Activated CD4-positive, alpha-beta T cell treated with anti-CD3 and anti-CD28 coated beads for 36 hours (primary cell): ENCODE measurements at regions of chr15 and their contacts with region 1.

Region 1: DNA sequence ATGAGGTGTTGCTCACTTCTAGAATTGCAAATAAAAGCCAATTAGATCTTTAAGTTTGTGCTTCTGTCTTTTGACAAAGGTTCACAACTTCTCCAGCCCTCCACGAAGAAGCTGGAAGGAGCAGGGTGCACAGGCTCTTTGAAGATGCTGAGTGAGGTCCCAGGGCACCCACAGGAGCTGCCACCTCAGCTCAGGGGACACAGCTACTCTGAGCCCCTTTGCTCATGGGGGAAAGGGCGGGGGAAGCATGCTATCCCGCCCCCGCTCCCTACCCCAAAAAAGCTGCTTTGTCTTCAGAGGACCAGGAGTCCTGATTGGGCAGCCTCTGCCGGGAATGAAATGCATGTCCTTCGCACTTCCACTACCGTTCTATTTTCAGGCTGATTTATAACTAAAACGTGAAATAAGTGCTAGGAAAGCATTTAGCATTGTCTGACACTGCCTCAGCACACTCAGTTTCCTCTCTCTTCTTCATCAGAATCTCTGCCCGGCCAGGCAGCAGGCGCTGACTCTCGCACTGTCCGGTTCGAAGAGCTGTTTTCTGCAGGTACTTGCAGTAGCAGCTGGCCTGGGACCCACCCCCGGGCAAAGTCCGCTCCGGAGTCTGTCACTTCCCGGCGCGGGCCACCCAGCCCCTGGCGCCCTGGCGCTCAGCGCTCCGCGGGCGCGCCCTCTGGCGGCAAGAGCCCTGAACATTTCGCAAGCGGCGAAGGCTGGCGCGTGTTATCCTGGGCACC is 45.5 kb upstream of the KLHL25 start:
- DNase-seq: peak; percentile 89
- ATAC-seq: peak; percentile 97
- H3K4me3 Mint-ChIP-seq: peak overlapping the region; percentile 44
- H3K27ac Mint-ChIP-seq: no peak overlapping the region
- H3K4me1 Mint-ChIP-seq: no peaks in the 10 kb centered on the region
- H3K27me3 Mint-ChIP-seq: peaks cover 5% of the 10 kb centered on the region

Region 2: DNA sequence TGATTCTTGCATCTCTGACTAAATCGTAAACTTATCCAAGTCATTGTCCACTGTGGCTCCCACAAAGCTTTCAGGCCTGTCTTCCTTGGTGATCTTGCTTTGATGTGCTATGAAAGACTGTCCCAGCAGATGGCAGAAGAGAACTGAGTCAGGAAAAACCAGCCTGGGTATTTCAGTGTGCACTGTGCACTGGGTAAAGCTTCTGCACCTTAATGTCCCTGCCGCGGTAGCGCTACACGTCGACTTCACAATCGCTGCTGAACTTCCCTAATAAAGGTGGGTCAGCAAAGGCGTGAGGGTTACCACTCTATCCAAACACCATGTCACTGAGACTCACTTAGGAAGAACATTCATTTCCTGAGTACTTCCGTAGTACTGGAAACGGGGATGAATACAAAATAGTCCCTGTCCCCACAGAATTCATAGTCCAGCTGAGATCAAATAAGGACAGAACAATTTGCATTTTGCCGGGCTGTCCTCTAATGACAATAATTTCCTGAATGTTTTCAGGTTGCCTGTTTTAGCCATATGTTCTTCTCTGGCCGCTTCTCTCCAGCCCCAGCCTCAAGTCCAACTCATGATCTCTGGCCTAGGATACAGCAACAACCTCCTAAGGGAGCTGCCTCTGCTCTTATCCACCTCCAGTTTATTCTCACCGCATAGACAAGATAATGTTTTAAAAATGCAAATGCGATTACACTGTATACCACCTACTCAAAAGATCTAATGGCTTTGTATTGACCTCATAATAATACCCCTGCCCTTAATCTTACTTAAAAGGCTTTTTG is 543.4 kb before region 1 on chr15:
- CTCF ChIA-PET with region 1: interaction called, 11 read pairs
- POLR2A ChIA-PET with region 1: no interaction called
- intact Hi-C with region 1: loop called (anchors 1 to 5 kb)
- DNase-seq: peak; percentile 79
- ATAC-seq: peak; percentile 100
- H3K4me3 Mint-ChIP-seq: no peak overlapping the region
- H3K27ac Mint-ChIP-seq: peak overlapping the region; percentile 38
- H3K4me1 Mint-ChIP-seq: peaks cover 11% of the 10 kb centered on the region
- H3K27me3 Mint-ChIP-seq: peaks cover 1% of the 10 kb centered on the region

Region 3: DNA sequence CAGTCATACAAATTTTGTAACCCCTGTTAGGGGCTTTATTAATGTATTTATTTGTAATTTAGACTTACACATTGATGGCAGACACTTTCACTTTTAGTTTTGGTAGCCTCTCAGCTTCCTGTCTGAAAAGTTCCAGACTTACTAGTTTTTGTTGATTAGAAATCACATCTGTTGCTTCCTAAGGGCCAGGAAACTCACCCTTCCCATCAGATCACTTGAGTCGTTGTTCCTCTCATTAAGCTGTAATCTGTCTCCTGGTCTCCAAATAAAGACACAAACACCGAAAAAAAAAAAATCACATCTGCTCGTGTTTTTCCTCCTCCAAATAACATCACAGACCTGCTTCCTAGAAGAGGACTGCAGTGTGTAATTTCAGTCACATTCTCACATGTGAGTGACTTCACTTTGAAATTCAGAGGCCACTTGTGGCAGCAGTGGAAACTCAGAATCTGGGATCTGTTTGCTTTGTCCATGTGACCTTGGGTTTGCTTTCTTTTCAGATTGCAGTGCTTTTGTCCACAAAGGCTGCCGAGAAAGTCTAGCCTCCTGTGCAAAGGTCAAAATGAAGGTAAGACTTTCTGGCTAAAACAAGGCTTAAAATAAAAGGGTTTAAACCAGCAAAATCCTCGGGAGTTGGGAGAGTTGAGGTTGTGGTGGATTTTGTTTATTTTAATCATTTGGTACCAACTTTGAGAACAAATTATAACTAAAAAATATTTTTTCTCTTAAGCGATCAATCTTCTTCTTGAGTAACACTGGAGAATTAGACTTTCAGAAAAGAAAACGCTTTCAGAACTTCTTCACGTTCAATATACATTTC is 132.5 kb before region 1 on chr15:
- CTCF ChIA-PET with region 1: no interaction called
- POLR2A ChIA-PET with region 1: no interaction called
- intact Hi-C with region 1: no loop called
- DNase-seq: peak; percentile 47
- ATAC-seq: peak; percentile 13
- H3K4me3 Mint-ChIP-seq: peak overlapping the region; percentile 68
- H3K27ac Mint-ChIP-seq: peak overlapping the region; percentile 96
- H3K4me1 Mint-ChIP-seq: peaks cover 90% of the 10 kb centered on the region
- H3K27me3 Mint-ChIP-seq: no peaks in the 10 kb centered on the region

Region 4: DNA sequence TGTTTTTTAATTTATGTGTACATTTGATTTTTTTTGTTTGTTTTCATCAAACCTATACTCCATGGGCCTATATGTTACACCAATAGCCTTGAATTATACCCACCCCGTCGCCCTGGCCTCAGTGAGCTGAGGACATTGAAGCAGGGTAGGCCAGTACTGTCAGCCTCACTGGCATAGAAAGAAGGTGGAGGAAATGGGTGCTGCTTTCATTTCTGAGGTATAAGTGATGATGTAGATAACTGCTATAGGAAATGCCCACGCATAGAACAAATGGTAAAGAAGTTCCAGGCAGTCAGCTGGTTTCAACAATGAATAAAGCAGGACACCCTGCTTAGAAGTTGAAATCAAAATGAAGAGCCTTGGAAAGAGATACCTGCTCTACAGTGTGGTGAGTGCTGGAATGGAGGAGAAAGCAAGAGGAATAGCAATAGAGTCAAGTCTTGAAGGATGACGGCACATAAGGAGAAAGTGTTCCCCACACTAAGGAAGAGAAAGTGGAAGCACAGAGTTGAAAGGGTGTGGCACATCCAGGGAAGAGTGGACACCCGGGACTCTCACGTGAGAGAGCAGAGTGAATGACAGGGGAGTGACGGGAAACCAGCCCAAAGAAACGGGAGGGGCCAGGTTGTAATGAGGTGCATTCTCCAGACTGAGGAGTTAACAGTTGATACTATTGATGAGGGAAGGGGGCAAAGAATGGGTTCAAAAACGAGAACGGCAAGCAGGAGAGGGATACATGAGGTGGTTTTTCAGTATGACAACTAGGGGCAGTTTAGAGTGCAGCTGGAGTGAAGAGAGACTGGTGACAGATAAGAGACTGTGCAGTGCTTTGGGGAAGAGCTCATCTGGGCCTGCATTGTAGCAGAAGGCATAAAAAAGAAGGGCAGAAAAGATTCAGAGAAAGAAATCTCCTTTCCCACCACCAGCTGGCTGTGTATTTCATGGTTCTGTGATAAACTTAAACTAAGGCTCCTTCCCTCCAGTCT is 116.0 kb before region 1 on chr15:
- CTCF ChIA-PET with region 1: interaction called, 25 read pairs
- POLR2A ChIA-PET with region 1: interaction called, 8 read pairs
- intact Hi-C with region 1: no loop called
- DNase-seq: peak; percentile 45
- ATAC-seq: peak; percentile 82
- H3K4me3 Mint-ChIP-seq: peak overlapping the region; percentile 50
- H3K27ac Mint-ChIP-seq: peak overlapping the region; percentile 98
- H3K4me1 Mint-ChIP-seq: peaks cover 68% of the 10 kb centered on the region
- H3K27me3 Mint-ChIP-seq: no peaks in the 10 kb centered on the region

Region 5: DNA sequence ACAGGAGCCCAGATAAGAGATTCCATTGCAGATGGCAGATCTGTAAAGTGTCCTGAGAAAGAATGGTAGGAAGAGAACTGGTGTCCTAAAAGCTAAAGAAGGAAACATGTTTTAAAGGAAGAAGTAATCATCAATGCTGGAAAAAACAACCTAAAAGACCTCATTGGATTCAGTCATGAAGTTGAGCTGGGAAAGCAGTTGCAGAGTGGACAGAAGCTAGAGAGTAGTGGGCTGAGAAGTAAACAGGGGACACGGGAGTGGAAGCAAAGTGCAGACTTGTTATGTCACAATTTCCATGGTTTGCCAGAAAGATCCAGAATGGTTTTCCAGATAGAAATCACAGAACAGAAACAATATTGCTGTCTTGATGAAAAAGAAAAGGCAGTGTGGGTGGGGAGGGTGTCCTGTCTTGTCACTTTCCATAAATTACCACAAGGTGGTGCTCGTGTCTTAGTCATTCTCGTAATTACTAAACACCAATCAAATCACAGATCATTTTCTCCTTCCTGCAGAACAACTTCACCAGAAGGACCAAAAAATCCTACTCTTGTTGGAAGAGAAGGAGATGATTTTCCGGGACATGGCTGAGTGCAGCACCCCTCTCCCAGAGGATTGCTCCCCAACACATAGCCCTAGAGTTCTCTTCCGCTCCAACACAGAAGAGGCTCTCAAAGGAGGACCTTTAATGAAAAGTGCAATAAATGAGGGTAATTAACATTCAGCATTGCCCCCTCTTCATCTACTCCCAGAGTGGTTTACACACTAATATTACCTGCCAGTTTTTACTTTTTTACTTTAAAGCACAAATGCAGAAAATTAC is 110.0 kb before region 1 on chr15:
- CTCF ChIA-PET with region 1: interaction called, 25 read pairs
- POLR2A ChIA-PET with region 1: interaction called, 8 read pairs
- intact Hi-C with region 1: loop called (anchors 1 kb)
- DNase-seq: peak; percentile 57
- ATAC-seq: peak; percentile 79
- H3K4me3 Mint-ChIP-seq: no peak overlapping the region
- H3K27ac Mint-ChIP-seq: peak overlapping the region; percentile 88
- H3K4me1 Mint-ChIP-seq: peaks cover 27% of the 10 kb centered on the region
- H3K27me3 Mint-ChIP-seq: no peaks in the 10 kb centered on the region

Region 6: GRCh38 chr15:85825692-85826091 is 14.5 kb before region 1 on chr15:
- CTCF ChIA-PET with region 1: interaction called, 20 read pairs
- POLR2A ChIA-PET with region 1: no interaction called
- intact Hi-C with region 1: no loop called
- DNase-seq: no peak
- ATAC-seq: no peak
- H3K4me3 Mint-ChIP-seq: no peak overlapping the region
- H3K27ac Mint-ChIP-seq: no peak overlapping the region
- H3K4me1 Mint-ChIP-seq: no peaks in the 10 kb centered on the region
- H3K27me3 Mint-ChIP-seq: no peaks in the 10 kb centered on the region

Region 7: DNA sequence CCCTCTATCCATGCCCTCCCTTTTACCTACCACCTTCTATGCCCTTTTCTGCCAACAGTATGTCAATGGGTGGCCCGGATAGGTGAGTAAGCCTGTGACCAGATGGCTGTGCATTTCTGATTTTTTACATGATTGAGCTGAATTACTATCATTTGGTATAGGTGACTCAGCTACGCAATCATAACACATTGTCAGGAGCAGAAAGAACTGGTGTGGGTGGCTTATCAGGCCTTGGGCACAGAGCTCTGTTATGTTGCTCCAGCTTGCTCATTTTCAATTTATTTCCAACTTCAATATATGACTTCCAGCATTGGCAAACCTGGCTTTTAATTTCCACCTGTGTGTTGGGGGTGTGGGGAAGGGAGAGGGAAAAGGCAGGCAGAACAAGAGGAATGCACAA is 152.9 kb after region 1 on chr15:
- CTCF ChIA-PET with region 1: no interaction called
- POLR2A ChIA-PET with region 1: no interaction called
- intact Hi-C with region 1: no loop called
- DNase-seq: no peak
- ATAC-seq: no peak
- H3K4me3 Mint-ChIP-seq: no peak overlapping the region
- H3K27ac Mint-ChIP-seq: no peak overlapping the region
- H3K4me1 Mint-ChIP-seq: no peaks in the 10 kb centered on the region
- H3K27me3 Mint-ChIP-seq: peaks cover 3% of the 10 kb centered on the region

Region 8: DNA sequence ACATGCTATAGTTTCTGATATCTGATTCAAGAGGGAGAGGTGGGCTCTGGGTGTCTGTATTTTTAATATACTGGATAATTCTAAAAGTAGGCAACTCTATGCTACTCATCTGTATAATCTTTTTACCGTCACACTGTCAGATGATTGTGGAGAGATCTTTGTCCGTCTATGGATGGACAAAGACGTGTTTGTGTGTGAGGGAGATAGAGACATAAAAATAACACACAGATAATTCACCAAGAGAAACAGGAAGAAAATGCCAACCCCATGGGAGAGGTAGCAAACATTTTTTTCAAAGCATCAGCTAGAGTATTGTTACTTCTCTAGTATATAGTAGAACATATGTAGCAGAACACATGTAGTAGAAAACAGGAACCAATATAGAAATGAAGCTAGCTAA is 585.5 kb after region 1 on chr15:
- CTCF ChIA-PET with region 1: no interaction called
- POLR2A ChIA-PET with region 1: no interaction called
- intact Hi-C with region 1: no loop called
- DNase-seq: no peak
- ATAC-seq: no peak
- H3K4me3 Mint-ChIP-seq: no peak overlapping the region
- H3K27ac Mint-ChIP-seq: no peak overlapping the region
- H3K4me1 Mint-ChIP-seq: no peaks in the 10 kb centered on the region
- H3K27me3 Mint-ChIP-seq: no peaks in the 10 kb centered on the region